ENCODE measurements at regions of chr3 and their contacts with region 1.

Region 1: GRCh38 chr3:39499651-39500240 is 32.3 kb downstream of the MOBP start:
- DNase-seq: peak in 2 of 3 donors; percentile 32 to 40
- H3K4me3 ChIP-seq: no peak overlapping the region
- H3K27ac ChIP-seq: no peak overlapping the region
- H3K4me1 ChIP-seq: peaks cover 0 to 13% (median 4%) of the 10 kb centered on the region in 4 experiments
- H3K27me3 ChIP-seq: peaks cover 11 to 36% (median 24%) of the 10 kb centered on the region in 5 experiments

Region 2: GRCh38 chr3:39447637-39448483 is 51.9 kb before region 1 on chr3:
- CTCF ChIA-PET with region 1: interaction called, 25 read pairs
- POLR2A ChIA-PET with region 1: no interaction called
- DNase-seq: peak; percentile 66 to 80 (median 66)
- H3K4me3 ChIP-seq: no peak overlapping the region
- H3K27ac ChIP-seq: no peak overlapping the region
- H3K4me1 ChIP-seq: peaks cover 0 to 2% (median 0%) of the 10 kb centered on the region in 4 experiments
- H3K27me3 ChIP-seq: no peaks in the 10 kb centered on the region

Region 3: DNA sequence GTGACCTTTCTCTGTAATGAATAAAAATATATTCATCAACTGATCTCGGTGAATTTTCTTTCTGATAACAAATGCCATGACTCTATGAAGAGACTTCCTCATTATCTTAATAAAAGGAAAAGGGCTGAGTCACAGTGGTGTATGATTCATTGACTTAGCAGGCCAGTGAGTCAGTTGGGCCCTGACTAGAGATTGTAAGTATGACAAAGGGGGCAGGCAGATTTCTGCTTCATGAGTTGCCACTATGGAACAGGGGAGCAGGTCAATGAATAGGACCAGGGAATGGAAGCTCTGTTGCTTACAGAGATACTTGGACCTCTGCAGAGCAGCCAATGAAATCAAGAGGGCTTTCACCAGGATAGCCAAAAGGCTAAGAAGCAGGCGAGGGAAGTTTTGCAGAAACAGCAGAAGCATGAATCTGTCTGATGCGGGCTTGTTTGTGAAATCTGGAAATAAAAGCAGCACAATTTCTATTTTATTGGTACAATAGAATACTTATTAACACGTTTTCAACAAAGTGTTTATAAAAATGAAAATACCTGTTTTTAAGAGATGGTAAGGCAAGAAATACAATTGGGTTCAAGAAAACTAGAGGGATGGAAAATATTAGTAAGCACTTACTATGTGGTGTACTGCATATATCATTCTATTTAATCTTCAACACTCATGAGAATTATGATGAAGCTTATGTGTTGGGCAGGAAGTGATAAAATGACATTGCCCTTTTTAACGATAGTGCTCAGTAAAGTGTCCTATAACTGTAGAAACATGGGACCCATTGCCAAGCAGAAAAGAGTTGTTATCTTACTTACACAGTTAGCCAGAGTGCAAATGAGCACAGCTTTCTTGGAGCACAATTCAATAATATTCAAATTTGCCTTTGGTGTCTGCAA is 139.8 kb after region 1 on chr3:
- CTCF ChIA-PET with region 1: no interaction called
- POLR2A ChIA-PET with region 1: no interaction called
- DNase-seq: peak; percentile 92 to 99 (median 97)
- H3K4me3 ChIP-seq: peak overlapping the region in 1 of 7 experiments; percentile 17
- H3K27ac ChIP-seq: peak overlapping the region; percentile 55 to 84
- H3K4me1 ChIP-seq: peaks cover 0 to 39% (median 16%) of the 10 kb centered on the region in 4 experiments
- H3K27me3 ChIP-seq: no peaks in the 10 kb centered on the region

Region 4: DNA sequence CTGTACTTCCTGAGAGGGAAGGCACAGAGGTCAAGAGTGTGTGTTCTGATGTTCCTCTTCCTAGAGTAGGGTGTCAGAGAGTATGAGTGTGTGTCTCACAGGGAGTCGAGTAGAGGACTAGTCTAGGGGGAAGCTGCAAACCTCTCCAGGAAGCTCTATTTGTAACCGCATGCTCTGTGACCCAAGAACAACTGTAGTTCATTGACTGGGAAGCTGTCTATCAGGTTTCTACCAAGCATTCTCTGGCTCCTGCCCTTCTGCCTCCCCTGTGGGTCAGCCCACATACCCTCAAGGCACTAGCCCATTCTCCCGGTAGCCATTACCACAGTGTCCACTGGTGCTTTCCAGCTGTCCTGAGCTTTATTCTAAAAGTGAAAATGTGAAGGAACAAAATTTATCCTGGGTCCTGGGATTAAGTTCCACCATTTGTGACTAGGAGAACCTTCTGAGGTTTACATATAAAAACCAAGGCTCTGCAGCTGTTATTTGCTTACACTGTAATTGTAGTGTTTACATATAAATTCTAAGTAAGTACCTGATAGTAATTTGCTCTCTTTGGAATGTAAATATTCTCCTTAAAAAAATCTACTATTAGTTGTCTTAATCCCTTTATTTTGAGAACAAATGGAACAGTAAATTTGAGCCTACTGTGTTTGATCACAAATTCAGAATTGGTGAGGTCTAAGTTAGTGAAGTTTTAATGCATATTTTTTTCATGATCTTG is 350.4 kb after region 1 on chr3:
- CTCF ChIA-PET with region 1: no interaction called
- POLR2A ChIA-PET with region 1: no interaction called
- DNase-seq: peak; percentile 9 to 65 (median 50)
- H3K4me3 ChIP-seq: no peak overlapping the region
- H3K27ac ChIP-seq: no peak overlapping the region
- H3K4me1 ChIP-seq: peaks cover 0 to 7% (median 4%) of the 10 kb centered on the region in 4 experiments
- H3K27me3 ChIP-seq: no peaks in the 10 kb centered on the region

Measured in common myeloid progenitor, CD34-positive (primary cell).